ENCODE measurements at regions of chr20 and their contacts with region 1.

Region 1: DNA sequence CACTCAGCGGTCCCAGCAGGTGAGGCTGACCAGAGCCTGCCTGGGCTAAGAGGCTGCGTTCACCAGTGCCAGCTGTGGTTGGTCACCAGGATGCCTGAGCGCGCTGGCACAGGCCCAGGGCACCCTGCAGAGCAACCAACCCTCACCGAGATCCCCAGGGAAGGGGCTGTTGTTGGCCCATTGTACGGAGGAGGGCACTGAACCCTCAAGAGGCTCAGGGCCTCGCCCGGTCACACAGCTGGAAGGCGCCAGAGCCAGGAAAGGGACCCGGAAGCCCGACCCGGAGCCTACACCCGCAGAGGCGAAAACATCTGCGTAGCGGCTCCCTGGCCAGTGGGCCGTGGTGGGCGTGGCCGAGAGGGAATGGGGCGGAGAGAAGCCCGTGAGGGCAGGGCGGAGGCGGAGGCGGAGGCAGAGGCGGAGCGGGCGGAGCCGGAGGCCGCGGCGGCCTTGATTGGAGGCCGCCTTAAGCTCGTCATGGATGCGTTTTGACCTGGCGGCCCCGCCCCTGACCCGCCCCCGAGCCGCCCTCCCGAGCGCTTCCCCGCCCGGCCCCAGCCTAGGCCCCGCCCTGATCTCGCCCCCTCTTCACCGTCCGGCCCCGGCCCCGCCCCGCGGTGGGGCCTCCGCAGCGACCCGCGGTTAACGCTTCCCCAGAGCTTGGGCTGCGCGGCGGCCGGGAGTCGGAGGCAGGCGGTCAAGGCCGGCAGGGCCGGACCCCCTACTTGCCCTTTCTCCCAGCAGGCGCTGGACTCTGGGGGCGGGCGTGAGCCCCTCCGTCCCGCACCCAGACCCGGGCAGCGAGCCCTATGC is 2.2 kb upstream of the MRGBP start:
- DNase-seq: peak; percentile 98
- H3K4me3 ChIP-seq: peak overlapping the region; percentile 59 to 82 (median 68)
- H3K27ac ChIP-seq: peak overlapping the region; percentile 90 to 94 (median 90)
- H3K4me1 ChIP-seq: peaks cover 0 to 52% (median 36%) of the 10 kb centered on the region in 4 donors
- H3K27me3 ChIP-seq: no peaks in the 10 kb centered on the region
- CTCF ChIP-seq: no peak
- EP300 ChIP-seq: peak in 1 of 4 donors; percentile 17
- POLR2A ChIP-seq: peak; percentile 83 to 90

Region 2: GRCh38 chr20:62143118-62143973 is 650.8 kb before region 1 on chr20 and contains the starts of genes PSMA7 and SS18L1:
- intact Hi-C with region 1: loop called (anchors 5 kb)
- DNase-seq: peak; percentile 93
- H3K4me3 ChIP-seq: peak within 1 kb of the TSS; percentile 71 to 92 (median 90)
- H3K27ac ChIP-seq: peak within 1 kb of the TSS; percentile 92 to 97 (median 96)
- H3K4me1 ChIP-seq: peaks cover 0 to 45% (median 36%) of the 10 kb centered on the region in 4 donors
- H3K27me3 ChIP-seq: no peaks in the 10 kb centered on the region
- CTCF ChIP-seq: no peak
- EP300 ChIP-seq: no peak
- POLR2A ChIP-seq: peak; percentile 58 to 73
- total RNA-seq, gene PSMA7: 192 to 388 (median 313) TPM
- total RNA-seq, gene SS18L1: 7.2 to 11.7 (median 11.1) TPM

Region 3: DNA sequence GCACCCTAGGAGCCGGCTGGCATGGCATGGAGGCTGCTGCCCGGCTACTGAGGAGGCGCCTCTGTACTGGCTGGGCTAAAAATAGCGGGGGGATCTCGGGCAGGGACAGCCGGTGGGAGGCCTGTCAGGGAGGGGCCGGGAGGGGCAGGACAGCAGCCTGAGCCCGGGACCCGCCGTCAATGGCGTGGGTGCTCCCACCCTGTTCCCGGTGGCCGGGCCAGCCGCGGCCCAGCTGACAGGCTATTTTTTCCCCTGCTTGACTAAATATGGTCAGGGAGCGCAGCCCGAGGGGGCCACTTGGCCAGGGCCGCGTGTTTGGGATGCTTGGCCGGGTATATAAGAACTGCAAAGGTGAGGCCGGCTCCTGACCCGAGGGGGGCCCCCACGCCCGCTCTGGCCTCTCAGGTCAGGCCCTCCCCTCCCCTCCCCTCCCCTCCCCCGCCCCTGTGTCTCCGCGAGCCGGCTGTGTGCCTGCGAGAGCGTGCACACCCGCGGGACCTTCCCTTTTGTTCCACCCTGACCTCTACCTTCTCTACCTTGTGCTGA is 244.0 kb before region 1 on chr20:
- intact Hi-C with region 1: loop called (anchors 10 kb)
- DNase-seq: peak; percentile 87
- H3K4me3 ChIP-seq: peak overlapping the region; percentile 55 to 85 (median 78)
- H3K27ac ChIP-seq: peak overlapping the region; percentile 91 to 97 (median 94)
- H3K4me1 ChIP-seq: peaks cover 0 to 87% (median 76%) of the 10 kb centered on the region in 4 donors
- H3K27me3 ChIP-seq: peaks cover 0 to 39% (median 6%) of the 10 kb centered on the region in 3 donors
- CTCF ChIP-seq: no peak
- EP300 ChIP-seq: peak in 2 of 4 donors; percentile 32 to 58
- POLR2A ChIP-seq: peak in 1 of 2 donors; percentile 12

Region 4: DNA sequence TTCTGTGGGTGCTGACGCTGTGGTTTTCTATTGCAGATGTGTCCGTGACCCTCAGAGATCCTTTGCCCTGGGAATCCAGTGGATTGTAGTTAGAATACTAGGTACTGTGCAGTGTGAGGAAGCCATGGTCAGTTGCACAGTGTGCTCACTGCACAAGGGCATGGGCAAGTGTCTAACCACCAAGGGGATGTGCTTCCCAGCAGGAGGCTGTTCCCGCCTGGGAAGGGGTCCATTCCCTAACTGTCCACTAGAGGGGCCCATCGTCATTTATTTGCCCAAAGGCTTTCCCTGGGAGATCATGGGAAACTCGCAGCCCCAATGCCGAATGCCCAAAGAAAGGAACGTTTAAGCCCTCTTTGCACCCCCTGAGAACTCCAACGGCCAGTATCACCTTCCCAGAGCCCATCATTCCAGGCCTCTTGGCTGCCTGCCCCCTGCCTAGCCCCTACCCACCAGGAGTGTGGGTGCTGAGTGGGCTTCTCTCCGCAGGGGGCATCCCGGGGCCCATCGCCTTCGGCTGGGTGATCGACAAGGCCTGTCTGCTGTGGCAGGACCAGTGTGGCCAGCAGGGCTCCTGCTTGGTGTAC is 125.6 kb before region 1 on chr20:
- intact Hi-C with region 1: loop called (anchors 1 kb)
- DNase-seq: peak; percentile 90
- H3K4me3 ChIP-seq: no peak overlapping the region
- H3K27ac ChIP-seq: no peak overlapping the region
- H3K4me1 ChIP-seq: peaks cover 0 to 5% (median 2%) of the 10 kb centered on the region in 4 donors
- H3K27me3 ChIP-seq: no peaks in the 10 kb centered on the region
- CTCF ChIP-seq: peak; percentile 89 to 96 (median 92)
- EP300 ChIP-seq: no peak
- POLR2A ChIP-seq: no peak

Region 5: DNA sequence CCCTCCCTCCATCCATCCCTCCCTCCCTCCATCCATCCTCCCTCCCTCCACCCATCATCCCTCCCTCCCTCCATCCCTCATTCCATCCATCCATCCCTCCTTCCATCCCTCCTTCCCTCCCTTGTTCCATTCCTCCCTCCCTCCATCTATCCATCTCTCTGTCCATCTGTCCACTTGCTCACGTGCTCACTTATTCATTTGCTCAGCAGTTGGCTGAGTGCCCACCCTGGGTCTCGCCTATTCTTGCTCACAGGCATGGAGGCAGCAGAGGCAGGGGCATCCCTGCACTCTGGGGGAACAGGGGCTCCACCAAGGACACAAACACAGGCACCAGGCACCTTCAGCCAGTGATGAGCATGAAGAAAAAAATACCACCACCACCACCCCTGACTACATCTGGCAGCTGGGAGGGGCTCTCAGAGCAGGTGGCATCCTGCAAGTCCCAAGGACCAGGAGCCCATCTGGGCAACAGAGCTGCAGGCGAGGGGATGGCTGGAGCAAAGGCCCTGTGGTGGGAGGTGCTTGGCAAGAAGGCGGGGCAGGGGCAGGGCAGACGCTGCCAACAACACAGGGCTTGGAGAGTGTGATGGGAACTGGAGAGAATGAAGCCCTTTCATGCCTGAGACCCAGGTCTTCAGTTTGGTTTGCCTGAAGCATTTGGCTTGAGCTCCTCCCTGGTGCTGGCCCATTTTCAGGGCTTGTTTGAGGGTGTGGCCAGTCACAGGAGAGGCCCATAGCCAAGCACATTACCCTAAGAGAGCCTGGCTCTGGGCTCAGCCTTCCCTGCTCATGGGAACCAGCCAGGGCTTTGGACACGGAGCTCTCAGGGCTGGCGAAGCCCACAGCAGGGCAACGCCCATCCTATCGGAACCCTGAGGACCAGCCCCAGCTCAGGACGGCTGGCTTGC is 38.0 kb before region 1 on chr20:
- intact Hi-C with region 1: no loop called
- DNase-seq: no peak
- H3K4me3 ChIP-seq: no peak overlapping the region
- H3K27ac ChIP-seq: no peak overlapping the region
- H3K4me1 ChIP-seq: peaks cover 0 to 50% (median 37%) of the 10 kb centered on the region in 4 donors
- H3K27me3 ChIP-seq: no peaks in the 10 kb centered on the region
- CTCF ChIP-seq: no peak
- EP300 ChIP-seq: no peak
- POLR2A ChIP-seq: no peak

Region 6: GRCh38 chr20:62808211-62808865 is 14.2 kb after region 1 on chr20:
- intact Hi-C with region 1: loop called (anchors 1 kb)
- DNase-seq: no peak
- H3K4me3 ChIP-seq: no peak overlapping the region
- H3K27ac ChIP-seq: no peak overlapping the region
- H3K4me1 ChIP-seq: peaks cover 0 to 35% (median 34%) of the 10 kb centered on the region in 4 donors
- H3K27me3 ChIP-seq: no peaks in the 10 kb centered on the region
- CTCF ChIP-seq: peak; percentile 63 to 98 (median 87)
- EP300 ChIP-seq: no peak
- POLR2A ChIP-seq: no peak

Region 7: GRCh38 chr20:62822788-62823651 is 28.9 kb after region 1 on chr20:
- intact Hi-C with region 1: no loop called
- DNase-seq: no peak
- H3K4me3 ChIP-seq: no peak overlapping the region
- H3K27ac ChIP-seq: no peak overlapping the region
- H3K4me1 ChIP-seq: peaks cover 3 to 33% (median 28%) of the 10 kb centered on the region in 4 donors
- H3K27me3 ChIP-seq: peaks cover under 1 to 22% (median 12%) of the 10 kb centered on the region in 3 donors
- CTCF ChIP-seq: peak in 1 of 4 experiments; percentile 14
- EP300 ChIP-seq: no peak
- POLR2A ChIP-seq: no peak